Heart left ventricle (tissue), 16 donors: ENCODE measurements at regions of chr13 and their contacts with region 1.

Region 1: GRCh38 chr13:27251166-27252091 is at the start of gene RPL21:
- DNase-seq: peak; percentile 96 to 99 (median 97)
- ATAC-seq: peak; percentile 99
- H3K4me3 ChIP-seq: peak within 1 kb of the TSS; percentile 69 to 96 (median 80)
- H3K27ac ChIP-seq: peak within 1 kb of the TSS; percentile 92 to 99 (median 96)
- H3K4me1 ChIP-seq: peaks cover 12 to 48% (median 26%) of the 10 kb centered on the region in 12 donors
- H3K27me3 ChIP-seq: no peaks in the 10 kb centered on the region
- CTCF ChIP-seq: no peak
- POLR2A ChIP-seq: peak in 1 of 2 donors; percentile 90
- total RNA-seq, gene RPL21: 292 to 825 (median 609) TPM

Region 2: DNA sequence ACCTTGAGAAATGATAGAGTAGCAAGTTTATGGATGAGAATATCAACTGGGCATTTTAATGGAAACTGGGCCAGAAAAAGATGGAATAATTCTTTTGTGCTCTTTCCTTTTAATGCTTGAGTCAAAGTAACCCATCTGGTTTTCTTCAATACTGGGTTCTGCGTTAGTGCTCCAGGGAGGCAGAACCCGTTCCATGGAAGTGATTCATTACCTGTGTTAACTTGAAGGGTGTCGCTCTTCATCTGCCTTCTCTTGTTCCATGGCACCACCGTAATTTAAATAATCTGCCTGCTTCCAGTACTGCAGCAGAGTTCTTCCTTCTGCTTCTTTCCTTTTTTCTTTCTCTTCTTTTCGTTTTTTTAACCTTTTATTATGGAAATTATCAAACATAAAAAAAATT is 65.1 kb before region 1 on chr13:
- intact Hi-C with region 1: no loop called
- DNase-seq: no peak
- ATAC-seq: no peak
- H3K4me3 ChIP-seq: no peak overlapping the region
- H3K27ac ChIP-seq: no peak overlapping the region
- H3K4me1 ChIP-seq: peaks cover 0 to 12% (median 7%) of the 10 kb centered on the region in 12 donors
- H3K27me3 ChIP-seq: no peaks in the 10 kb centered on the region
- CTCF ChIP-seq: no peak
- POLR2A ChIP-seq: no peak

Region 3: GRCh38 chr13:27270594-27271520 is 19.4 kb after region 1 on chr13 and contains the start of gene RASL11A:
- intact Hi-C with region 1: loop called in 4 of 10 experiments (anchors 1 to 2 kb)
- DNase-seq: peak; percentile 87 to 94 (median 88)
- ATAC-seq: peak; percentile 77 to 95 (median 92)
- H3K4me3 ChIP-seq: peak within 1 kb of the TSS; percentile 49 to 96 (median 90)
- H3K27ac ChIP-seq: peak within 1 kb of the TSS; percentile 72 to 97 (median 90)
- H3K4me1 ChIP-seq: peaks cover 0 to 53% (median 26%) of the 10 kb centered on the region in 12 donors
- H3K27me3 ChIP-seq: peaks cover 0 to 9% (median 0%) of the 10 kb centered on the region in 9 donors
- CTCF ChIP-seq: peak; percentile 84 to 99 (median 95)
- POLR2A ChIP-seq: peak in 1 of 2 donors; percentile 92
- total RNA-seq, gene RASL11A: 2.9 to 13.7 (median 5.4) TPM

Region 4: GRCh38 chr13:27751953-27752525 is 500.6 kb after region 1 on chr13:
- intact Hi-C with region 1: no loop called
- DNase-seq: no peak
- ATAC-seq: no peak
- H3K4me3 ChIP-seq: no peak overlapping the region
- H3K27ac ChIP-seq: no peak overlapping the region
- H3K4me1 ChIP-seq: no peaks in the 10 kb centered on the region
- H3K27me3 ChIP-seq: peaks cover 0 to 17% (median 0%) of the 10 kb centered on the region in 9 donors
- CTCF ChIP-seq: no peak
- POLR2A ChIP-seq: no peak